Sigmoid colon (tissue), 7 donors: ENCODE measurements at regions of chr5 and their contacts with region 1.

Region 1: GRCh38 chr5:188488-189481 is 2.5 kb upstream of the LRRC14B start:
- DNase-seq: peak; percentile 94
- H3K4me3 ChIP-seq: peak overlapping the region in 3 of 4 donors; percentile 21 to 34 (median 32)
- H3K27ac ChIP-seq: no peak overlapping the region
- H3K4me1 ChIP-seq: peaks cover 0 to 49% (median 44%) of the 10 kb centered on the region in 4 donors
- H3K27me3 ChIP-seq: peaks cover 0 to 14% (median 0%) of the 10 kb centered on the region in 3 donors
- CTCF ChIP-seq: peak; percentile 90 to 97 (median 94)
- EP300 ChIP-seq: no peak
- POLR2A ChIP-seq: no peak

Region 2: GRCh38 chr5:270340-270739 is 81.6 kb after region 1 on chr5:
- intact Hi-C with region 1: loop called (anchors 5 kb)
- DNase-seq: no peak
- H3K4me3 ChIP-seq: peak overlapping the region in 1 of 4 donors; percentile 100
- H3K27ac ChIP-seq: peak overlapping the region; percentile 81 to 95 (median 90)
- H3K4me1 ChIP-seq: peaks cover 0 to 24% (median 11%) of the 10 kb centered on the region in 4 donors
- H3K27me3 ChIP-seq: no peaks in the 10 kb centered on the region
- CTCF ChIP-seq: no peak
- EP300 ChIP-seq: no peak
- POLR2A ChIP-seq: no peak

Region 3: DNA sequence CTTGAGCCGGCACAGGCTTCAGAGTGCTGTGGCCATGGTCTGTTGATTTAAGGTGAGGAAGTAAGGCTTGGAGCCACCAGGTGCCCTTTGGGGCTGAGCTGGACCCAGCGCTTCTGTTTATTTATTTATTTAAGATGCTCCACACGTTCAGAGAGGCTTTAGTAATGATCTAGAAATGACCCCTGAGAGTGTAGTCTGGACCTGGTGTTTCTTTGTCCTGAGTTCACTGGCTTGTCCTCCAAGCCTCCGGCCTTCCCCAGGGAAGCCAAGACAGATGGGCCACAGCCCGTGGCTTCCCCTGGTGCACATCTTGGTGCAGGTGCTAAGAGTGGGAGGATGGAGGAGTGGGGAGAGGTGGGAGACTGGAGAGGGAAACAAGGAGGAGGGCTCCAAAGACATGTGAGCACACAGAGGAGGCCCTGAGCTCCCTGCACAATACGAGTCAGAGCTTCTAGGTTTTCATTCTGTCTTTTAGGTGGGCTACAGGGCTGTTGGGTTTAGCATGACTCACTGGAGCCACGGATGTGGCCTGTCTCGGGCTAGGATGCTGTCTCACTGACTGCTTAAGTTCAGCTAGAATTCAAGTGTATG is 189.6 kb after region 1 on chr5:
- intact Hi-C with region 1: no loop called
- DNase-seq: peak; percentile 33
- H3K4me3 ChIP-seq: no peak overlapping the region
- H3K27ac ChIP-seq: no peak overlapping the region
- H3K4me1 ChIP-seq: peaks cover 0 to 12% (median 9%) of the 10 kb centered on the region in 4 donors
- H3K27me3 ChIP-seq: peaks cover 0 to 18% (median 15%) of the 10 kb centered on the region in 3 donors
- CTCF ChIP-seq: no peak
- EP300 ChIP-seq: no peak
- POLR2A ChIP-seq: no peak